ENCODE measurements at regions of chr11 and their contacts with region 1.

Region 1: DNA sequence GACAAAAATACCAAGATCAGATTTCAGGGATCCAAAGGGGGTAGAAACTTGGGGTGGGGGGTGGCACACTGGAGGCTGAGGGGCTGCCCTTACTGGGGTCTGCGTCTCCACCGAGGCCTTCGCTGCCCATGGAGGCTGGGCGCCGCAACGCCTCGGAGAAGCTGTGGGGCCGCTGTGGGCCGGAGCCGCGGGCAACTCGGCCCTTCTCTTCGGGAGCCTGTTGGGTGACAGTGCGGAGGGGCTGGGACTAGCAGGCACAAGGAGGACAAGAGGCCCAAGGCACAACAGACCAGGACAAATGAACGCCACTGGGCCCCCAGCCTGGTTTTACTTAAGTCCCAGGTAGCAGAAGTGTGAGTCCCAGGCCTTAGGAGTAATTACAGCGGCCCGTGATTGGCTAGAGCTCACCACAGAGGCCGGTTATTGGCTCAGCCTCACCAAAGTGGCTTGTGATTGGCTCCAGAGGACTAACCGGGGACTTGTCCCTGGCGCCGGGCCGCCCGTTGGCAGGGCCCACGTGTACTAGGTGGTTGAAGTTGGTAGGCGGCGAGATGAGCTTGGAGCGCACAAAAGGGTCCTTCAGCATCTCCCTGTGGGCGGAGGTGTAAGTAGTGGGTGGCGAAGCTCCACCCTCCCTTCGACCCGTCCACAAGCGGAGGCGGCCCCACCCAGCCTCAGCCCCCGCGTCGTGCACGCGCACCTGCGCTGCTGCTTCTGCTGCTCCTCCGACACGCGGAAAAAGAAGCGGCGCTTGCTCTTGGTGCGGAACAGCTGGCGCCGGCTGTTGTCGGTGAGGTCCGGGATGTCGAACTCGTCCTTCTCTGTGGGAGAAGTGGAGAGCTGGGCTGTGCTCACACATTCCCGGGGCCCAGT is 16.5 kb upstream of the MEN1 start:
- DNase-seq: no peak
- H3K4me3 ChIP-seq: no peak overlapping the region
- H3K27ac ChIP-seq: no peak overlapping the region
- H3K4me1 ChIP-seq: no peaks in the 10 kb centered on the region
- H3K27me3 ChIP-seq: no peaks in the 10 kb centered on the region
- CTCF ChIP-seq: no peak

Region 2: GRCh38 chr11:64207256-64208085 is 619.3 kb before region 1 on chr11:
- CTCF ChIA-PET with region 1: no interaction called
- POLR2A ChIA-PET with region 1: no interaction called
- intact Hi-C with region 1: no loop called
- DNase-seq: no peak
- H3K4me3 ChIP-seq: no peak overlapping the region
- H3K27ac ChIP-seq: no peak overlapping the region
- H3K4me1 ChIP-seq: 0 out of 2 replicates have a peak, but pooled peaks cover 4% of the 10 kb centered on the region
- H3K27me3 ChIP-seq: no peaks in the 10 kb centered on the region
- CTCF ChIP-seq: no peak

Region 3: DNA sequence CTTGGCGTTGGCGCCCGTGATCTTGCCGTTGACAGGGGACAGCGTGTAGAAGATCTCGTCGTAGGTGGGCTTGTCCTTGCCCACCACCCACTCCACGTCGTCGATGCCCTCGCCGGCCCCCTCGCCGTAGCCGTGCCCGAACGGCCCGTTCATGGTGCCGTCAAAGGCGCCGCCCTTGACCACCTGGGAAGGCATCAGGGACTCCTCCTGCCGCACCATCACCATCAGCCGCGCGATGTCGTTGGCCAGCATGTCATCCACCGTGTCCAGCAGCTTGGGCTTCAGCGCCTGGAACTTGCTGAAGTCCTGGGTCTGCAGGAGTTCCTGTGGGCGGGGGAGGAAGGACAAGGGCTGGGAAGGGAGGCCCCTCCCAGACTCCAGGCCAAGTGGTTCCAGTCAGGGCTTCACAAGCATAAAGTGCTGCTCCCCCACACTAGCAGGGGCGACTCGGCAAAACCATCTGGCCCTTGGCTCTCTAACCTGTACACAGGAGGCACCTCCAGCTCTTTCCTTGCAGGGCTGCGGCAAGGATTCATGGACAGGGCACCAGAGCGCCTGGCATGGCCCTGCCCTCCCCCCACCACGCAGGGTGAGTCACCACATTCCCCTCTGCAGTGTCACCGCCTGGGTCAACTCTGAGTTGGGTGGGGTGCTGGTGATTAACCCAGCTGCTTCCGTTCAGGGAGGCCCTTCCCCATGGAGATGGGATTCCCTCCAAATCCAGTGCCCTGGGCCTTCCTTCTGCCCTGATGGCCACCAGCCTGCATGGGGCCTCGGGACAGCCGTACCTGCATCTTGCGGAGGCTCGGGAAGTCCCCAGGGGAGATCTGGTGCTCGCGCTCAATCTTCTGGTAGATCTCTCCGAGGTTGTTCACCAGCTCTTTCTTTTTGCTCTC is 28.0 kb after region 1 on chr11:
- CTCF ChIA-PET with region 1: no interaction called
- POLR2A ChIA-PET with region 1: no interaction called
- intact Hi-C with region 1: no loop called
- DNase-seq: peak; percentile 96 to 99
- H3K4me3 ChIP-seq: peak overlapping the region; percentile 18; the same call in 1 of the 2 replicates
- H3K27ac ChIP-seq: peak overlapping the region; percentile 84
- H3K4me1 ChIP-seq: peaks cover 88% of the 10 kb centered on the region
- H3K27me3 ChIP-seq: no peaks in the 10 kb centered on the region
- CTCF ChIP-seq: no peak

Region 4: GRCh38 chr11:65224930-65225278 is 398.1 kb after region 1 on chr11:
- CTCF ChIA-PET with region 1: no interaction called
- POLR2A ChIA-PET with region 1: interaction called, 11 read pairs
- intact Hi-C with region 1: no loop called
- DNase-seq: peak; percentile 56 to 65
- H3K4me3 ChIP-seq: no peak overlapping the region
- H3K27ac ChIP-seq: no peak overlapping the region
- H3K4me1 ChIP-seq: peaks cover 12% of the 10 kb centered on the region
- H3K27me3 ChIP-seq: no peaks in the 10 kb centered on the region
- CTCF ChIP-seq: no peak

Measured in PC-9 (cell line).